Transverse colon (tissue), 4 donors: ENCODE measurements at regions of chr15 and their contacts with region 1.

Region 1: DNA sequence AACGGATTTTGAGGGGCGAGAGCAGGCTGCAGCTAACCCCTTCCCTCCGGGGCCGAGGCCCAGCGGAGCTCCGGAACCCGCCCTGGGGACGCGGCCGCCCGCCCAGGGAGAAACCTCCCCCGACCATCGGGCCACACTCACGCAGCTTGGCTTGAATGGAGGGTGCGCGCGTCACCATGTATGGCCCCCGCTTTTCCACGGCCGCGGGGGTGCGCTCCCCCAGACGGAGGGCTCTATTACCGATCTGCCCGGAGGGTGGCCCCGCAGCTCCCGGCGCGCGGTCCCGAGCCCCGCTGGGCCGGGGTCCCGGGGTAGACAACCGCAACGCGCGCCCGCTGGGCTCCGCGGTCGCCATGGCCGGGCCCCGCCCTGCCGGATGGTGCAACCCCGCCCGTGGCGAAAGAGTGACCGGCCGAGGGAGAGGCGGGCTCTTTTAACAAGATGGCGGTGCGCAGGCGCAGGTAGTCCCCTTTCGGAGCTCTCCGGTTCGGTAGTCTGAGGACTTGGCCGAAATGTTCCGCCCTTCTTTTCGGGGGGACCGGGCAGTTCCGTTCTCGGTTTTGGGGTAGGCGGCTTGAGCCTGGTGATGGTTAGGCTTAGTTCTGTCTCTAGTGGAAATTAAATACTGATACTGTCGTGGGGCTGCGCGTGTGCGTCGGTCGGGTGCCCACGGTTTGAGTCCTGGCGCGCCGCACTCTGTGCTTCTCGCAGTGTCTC is at the start of gene FAM219B:
- DNase-seq: peak; percentile 95
- H3K4me3 ChIP-seq: peak within 1 kb of the TSS; percentile 79 to 88 (median 80)
- H3K27ac ChIP-seq: peak within 1 kb of the TSS; percentile 94 to 98 (median 96)
- H3K4me1 ChIP-seq: peaks cover 14 to 32% (median 22%) of the 10 kb centered on the region in 4 donors
- H3K27me3 ChIP-seq: no peaks in the 10 kb centered on the region
- CTCF ChIP-seq: no peak
- EP300 ChIP-seq: no peak
- POLR2A ChIP-seq: peak; percentile 73
- total RNA-seq, gene FAM219B: 62.8 to 428 (median 68.7) TPM

Region 2: DNA sequence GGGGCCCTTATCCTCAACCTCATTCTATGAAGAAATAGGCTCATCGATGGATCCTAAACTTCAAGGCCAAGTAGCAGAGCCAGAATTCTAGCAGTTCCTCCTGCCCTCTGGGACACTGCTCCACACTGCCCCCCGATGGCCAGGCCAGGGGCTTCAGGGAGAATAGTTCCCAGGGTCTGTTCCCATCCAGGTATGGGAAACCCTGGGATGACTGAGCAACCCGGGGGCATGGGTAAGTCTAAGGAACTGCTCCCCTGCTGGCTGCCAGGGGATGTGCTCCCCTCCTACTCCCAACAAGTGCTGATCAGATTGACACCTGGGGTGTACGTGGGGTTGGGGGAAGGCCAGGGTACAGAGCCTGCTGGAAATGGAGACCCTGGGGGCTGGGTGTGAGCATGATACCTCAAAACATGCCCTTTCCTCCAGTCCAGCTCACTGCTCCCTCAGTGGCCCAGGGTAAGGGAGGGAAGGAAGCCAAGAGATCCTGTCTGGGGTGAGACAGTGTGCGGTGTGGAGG is 71.2 kb before region 1 on chr15:
- in situ Hi-C with region 1: loop called in 1 of 4 experiments (anchors 10 kb)
- intact Hi-C with region 1: no loop called
- DNase-seq: peak; percentile 75
- H3K4me3 ChIP-seq: no peak overlapping the region
- H3K27ac ChIP-seq: no peak overlapping the region
- H3K4me1 ChIP-seq: peaks cover 4 to 18% (median 13%) of the 10 kb centered on the region in 4 donors
- H3K27me3 ChIP-seq: no peaks in the 10 kb centered on the region
- CTCF ChIP-seq: peak; percentile 65 to 80 (median 76)
- EP300 ChIP-seq: no peak
- POLR2A ChIP-seq: no peak